ENCODE measurements at regions of chr15 and their contacts with region 1.

Region 1: DNA sequence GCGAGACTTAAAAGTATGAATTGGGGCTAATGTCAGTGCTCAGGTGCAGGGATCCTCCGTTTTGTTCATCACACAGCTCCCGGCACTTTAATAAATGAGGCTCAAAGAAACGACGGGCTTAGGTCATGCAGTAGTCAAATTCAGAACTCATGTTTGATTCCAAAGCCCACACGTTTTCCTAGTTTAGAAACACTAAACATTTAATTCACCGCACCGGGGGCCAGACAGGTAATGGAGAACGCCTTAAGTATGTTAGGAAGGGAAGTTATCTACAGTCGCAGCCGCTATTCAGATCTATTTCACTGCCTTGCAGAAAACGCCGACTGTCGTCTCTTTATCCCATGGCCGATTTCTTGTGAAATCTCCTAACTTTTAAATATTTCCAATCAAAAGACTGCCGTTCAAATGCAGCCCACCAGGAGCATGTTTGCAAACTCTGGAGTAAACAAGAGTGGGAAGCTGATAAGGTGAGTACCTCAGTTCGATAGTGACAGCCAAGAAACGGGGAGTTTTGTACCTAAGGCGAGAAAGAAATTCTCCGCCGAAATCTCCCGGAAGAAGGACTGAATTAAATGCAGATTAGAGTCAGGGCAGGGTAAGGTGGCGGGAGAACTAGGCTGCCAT is 569 bp downstream of the HIGD2B start:
- DNase-seq: no peak
- H3K4me3 ChIP-seq: peak overlapping the region; percentile 85
- CTCF ChIP-seq: no peak

Region 2: GRCh38 chr15:72491768-72492167 is 193.6 kb before region 1 on chr15:
- CTCF ChIA-PET with region 1: no interaction called
- POLR2A ChIA-PET with region 1: no interaction called
- DNase-seq: peak; percentile 44
- H3K4me3 ChIP-seq: no peak overlapping the region
- CTCF ChIP-seq: no peak

Region 3: DNA sequence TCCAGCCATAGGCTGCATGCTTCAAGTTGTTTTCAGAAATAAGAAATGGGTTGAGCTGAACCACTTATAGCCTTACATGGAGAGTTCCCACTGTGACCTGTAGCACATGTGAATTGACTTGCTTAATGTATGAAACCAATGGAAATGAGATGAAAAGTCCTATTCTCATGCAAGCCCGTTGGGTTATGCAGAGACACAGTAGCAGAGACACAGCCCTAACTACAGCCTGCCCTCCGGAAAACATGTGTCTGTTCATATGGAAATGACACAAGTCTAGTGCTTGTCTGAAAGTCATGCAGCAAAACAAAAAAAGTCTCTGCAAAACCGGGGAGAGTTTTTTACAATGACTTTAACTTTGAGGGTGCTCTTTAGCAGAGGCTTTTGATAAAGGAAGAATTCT is 13.9 kb before region 1 on chr15:
- CTCF ChIA-PET with region 1: interaction called, 16 read pairs
- POLR2A ChIA-PET with region 1: interaction called, 3 read pairs
- DNase-seq: no peak
- H3K4me3 ChIP-seq: no peak overlapping the region
- CTCF ChIP-seq: no peak

Measured in AG04449 (cell line).